ENCODE measurements at regions of chr19 and their contacts with region 1.

Region 1: DNA sequence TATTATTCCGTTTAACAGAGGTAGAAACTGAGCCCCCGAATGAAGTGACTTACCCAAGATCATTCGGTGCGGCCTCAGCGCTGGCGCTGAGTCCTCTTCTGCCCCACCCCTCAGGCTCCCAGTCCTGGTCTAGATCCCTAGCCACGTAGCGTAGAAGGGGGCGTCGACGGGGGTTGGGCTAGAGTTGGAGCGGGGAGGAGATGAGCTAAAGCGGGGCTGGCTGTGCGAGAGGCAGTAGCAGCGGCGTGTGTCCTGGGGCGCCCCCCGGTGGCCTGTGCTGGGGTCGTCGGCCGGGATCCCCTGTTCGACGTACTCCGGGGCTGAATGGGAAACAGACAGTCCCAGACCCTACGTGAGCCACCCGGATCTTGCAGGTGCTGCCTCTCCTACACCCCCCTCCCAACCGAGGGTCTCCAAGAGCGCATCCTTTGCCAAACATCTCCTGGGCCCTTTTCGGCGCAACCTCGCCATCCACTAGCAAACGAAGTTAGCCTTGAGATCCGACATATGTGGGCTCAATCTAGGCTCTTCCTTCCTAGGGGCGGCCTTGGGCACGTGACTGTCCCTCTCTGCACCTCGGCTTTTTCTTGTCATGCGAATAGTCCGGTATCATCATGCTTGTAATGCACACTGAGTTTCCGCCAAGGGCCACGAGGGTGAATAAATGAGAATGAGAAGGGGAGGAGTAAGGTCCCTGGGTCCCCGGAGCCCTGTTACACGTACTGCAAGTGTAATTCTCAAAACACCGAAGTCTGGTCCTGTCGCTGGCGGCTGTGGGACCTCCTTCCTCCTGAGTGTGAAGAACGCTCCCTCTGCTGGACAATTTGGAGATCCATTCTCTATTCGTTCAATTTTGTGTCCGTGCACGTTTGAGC is 47.7 kb downstream of the CYP4F22 start:
- DNase-seq: peak; percentile 92 to 94
- H3K4me3 ChIP-seq: peak overlapping the region; percentile 52; the same call in 1 of the 2 replicates
- H3K27ac ChIP-seq: no peak overlapping the region
- H3K4me1 ChIP-seq: peaks cover 12% of the 10 kb centered on the region
- H3K27me3 ChIP-seq: no peaks in the 10 kb centered on the region
- CTCF ChIP-seq: peak; percentile 78

Region 2: DNA sequence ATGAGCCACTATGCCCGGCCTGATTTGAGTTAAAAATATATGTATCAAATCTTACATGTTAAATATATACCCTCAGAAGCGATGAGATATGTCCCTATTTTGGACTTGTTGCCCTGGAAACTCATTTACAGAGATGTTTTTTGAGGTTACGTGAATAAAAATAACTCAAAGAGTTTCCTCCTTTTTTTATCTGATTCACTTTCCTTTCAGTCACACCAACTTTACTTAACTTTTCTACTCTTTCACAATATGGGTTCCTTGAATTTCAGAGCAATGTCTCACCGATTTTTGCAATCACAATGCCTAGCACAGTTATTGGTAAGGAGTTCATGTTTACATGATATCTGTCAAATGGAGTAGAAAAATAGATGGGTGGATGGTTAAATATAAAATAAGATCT is 612.4 kb before region 1 on chr19:
- CTCF ChIA-PET with region 1: interaction called, 13 read pairs
- POLR2A ChIA-PET with region 1: no interaction called
- intact Hi-C with region 1: no loop called
- DNase-seq: peak in 1 of 2 experiments; percentile 98
- H3K4me3 ChIP-seq: no peak overlapping the region
- H3K27ac ChIP-seq: peak overlapping the region; percentile 87
- H3K4me1 ChIP-seq: peaks cover 24% of the 10 kb centered on the region
- H3K27me3 ChIP-seq: no peaks in the 10 kb centered on the region
- CTCF ChIP-seq: no peak

Region 3: DNA sequence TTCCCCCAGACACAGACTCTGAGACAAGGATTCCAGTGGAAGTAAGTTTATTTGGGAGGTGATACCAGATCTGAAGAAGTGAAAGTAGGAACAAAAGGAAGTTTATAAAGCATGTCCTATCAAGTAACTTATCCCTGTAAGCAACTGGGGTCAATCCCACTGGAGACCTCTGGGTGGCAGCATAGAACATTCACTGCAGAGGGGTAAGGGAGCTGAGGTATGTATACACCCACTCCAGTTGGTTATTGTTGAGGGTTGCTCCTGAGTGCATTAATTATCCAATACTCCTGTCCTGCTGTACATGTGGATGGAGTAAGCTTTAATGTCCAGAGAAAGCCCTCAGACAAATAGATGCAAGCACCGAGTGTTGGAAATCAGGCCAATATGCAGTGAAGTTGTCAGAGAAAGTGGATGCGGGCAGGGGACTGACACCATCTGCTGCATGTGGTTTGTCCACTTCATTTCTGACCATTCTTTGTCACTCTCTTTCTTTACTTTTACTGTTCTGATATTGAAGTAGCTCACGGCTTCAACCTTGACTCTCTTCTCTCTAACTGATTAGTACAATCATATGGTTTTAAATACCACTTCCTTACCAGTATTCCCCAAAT is 401.9 kb before region 1 on chr19:
- CTCF ChIA-PET with region 1: interaction called, 5 read pairs
- POLR2A ChIA-PET with region 1: no interaction called
- intact Hi-C with region 1: loop called (anchors 1 kb)
- DNase-seq: peak; percentile 64 to 70
- H3K4me3 ChIP-seq: 0 out of 2 replicates have a peak overlapping the region, but pooled peaks have one; percentile 17
- H3K27ac ChIP-seq: no peak overlapping the region
- H3K4me1 ChIP-seq: peaks cover 5% of the 10 kb centered on the region; the same call in 1 of the 2 replicates
- H3K27me3 ChIP-seq: no peaks in the 10 kb centered on the region
- CTCF ChIP-seq: peak; percentile 92

Region 4: DNA sequence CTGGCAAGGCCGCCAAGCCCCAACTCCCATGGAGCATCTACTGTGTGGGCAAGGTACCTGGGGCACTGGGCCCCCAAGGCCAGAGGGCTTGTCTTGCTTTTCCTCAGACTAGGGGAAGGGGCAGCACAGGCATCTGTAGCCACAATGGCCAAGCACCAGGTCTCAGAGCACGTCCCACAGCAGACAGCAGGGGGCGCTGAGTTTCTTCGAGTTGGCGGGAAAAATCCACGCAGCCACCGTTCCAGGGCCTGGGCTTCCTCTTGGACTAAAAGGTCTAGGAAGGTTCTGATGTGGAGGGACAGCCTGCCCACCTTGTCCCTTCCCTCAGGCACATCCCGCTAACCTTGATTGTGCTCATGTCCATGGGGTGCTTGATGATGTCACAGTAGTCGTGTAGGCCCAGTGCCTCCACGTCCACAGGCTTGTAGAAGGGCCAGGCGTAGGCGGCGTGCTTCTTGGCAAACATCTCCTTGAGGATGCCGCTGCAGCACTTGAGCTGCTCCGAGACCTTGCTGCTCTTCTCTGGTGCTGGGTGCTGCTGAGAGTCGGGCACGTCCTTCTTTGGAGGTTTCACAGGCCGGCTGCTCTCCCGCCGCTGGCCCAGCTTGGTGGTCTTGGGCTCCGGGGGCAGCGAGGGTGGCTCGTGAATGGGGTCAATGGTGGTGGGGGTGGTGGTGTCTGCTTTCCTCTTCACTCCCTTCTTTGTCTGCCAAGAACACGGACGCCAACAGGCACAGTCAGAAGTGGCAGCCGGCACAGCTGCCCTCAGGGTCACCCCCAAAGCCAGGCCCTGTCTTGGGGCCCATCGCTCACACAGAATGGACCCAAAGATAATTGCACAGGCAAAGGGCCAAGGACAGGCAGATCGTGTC is 291.7 kb before region 1 on chr19:
- CTCF ChIA-PET with region 1: no interaction called
- POLR2A ChIA-PET with region 1: no interaction called
- intact Hi-C with region 1: loop called (anchors 5 kb)
- DNase-seq: peak in 1 of 2 experiments; percentile 50
- H3K4me3 ChIP-seq: no peak overlapping the region
- H3K27ac ChIP-seq: no peak overlapping the region
- H3K4me1 ChIP-seq: no peaks in the 10 kb centered on the region
- H3K27me3 ChIP-seq: no peaks in the 10 kb centered on the region
- CTCF ChIP-seq: peak; percentile 86

Region 5: DNA sequence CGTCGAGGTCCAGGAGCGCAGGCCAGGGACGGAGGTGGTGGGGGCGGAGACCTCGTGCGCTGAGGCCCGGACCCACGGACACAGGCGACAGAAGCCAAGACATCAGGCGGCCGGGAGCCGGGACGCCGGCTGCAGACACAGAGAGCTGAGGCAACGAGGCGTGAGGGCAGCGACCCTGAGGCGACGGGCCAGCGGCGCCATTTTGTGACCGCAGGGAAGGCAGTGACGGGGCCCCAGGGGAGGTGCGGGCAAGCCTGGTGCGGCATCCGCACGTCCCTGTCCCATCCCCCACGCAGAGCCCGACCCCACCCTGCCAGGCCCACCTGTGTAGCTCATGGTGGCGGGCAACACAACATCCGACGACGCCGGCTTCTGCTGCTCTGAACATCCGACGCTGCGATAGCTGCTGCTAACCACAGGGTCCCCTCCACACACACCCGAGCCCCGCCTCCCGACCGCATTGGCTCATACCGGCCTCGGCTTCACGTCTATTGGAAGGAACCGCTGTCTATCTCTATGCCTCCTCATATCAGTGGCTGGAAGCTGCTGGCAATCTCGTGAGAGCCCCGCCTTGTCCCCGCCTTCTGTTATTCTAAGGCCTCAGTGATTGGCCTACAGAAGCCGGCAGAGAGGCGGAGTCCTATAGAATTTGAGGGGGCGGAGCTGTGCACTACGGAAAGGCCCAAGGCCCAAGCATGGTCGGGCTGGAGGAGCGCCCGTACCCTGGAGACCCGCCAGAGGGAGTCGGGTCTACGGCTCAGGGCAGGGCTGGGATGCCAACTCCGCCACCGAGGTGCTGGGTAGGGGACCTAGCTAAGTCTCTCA is 137.2 kb before region 1 on chr19 and contains the start of gene AKAP8L:
- CTCF ChIA-PET with region 1: interaction called, 15 read pairs
- POLR2A ChIA-PET with region 1: interaction called, 3 read pairs
- intact Hi-C with region 1: loop called (anchors 1 kb)
- DNase-seq: peak; percentile 99 to 100
- H3K4me3 ChIP-seq: peak within 1 kb of the TSS; percentile 87
- H3K27ac ChIP-seq: peak within 1 kb of the TSS; percentile 39
- H3K4me1 ChIP-seq: peaks cover 17% of the 10 kb centered on the region
- H3K27me3 ChIP-seq: no peaks in the 10 kb centered on the region
- CTCF ChIP-seq: peak; percentile 80
- total RNA-seq, gene AKAP8L: 49.9 and 62.4 TPM in 2 replicates

Measured in PC-9 (cell line).